Transverse colon (tissue), 4 donors: ENCODE measurements at regions of chr22 and their contacts with region 1.

Region 1: DNA sequence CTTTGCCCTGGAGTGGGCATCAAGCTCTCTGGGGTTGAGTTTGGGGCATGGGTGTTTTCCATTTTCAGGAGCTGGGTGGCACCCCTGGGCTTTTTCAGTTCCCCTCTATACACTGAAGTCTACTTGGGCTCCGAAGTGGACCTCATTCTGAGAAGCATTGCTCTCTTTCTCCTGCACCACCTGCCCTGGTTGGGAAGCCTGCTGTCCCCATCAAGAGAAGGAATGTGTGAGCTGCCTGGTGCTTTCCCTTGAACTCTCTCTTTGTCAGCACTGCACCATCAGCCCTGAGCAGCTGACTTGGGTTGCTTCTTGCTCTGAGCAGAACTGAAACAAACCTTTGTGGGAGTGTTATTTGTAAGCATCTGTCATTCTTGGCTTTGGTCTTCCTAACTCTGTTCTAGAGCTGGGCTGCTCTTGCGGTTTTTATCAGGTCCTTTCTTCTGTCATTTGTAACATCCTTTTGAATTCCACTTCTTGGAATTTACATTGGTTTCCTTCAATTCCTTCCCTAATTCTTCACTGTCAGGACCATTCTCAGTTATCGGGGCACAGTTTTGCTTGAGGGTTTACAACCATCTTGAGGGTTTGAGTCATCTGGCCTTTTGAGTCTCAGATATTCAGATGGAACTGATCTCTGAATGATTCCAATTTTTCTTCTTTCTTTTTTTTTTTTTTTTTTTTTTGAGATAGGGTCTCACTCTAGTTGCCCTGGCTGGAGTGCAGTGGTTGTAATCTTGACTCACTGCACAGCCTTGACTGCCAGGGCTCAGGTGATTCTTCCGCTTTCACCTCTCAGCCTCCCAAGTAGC is 20.5 kb downstream of the UBE2L3 start:
- DNase-seq: peak; percentile 22
- H3K4me3 ChIP-seq: no peak overlapping the region
- H3K27ac ChIP-seq: no peak overlapping the region
- H3K4me1 ChIP-seq: peaks cover 7 to 57% (median 20%) of the 10 kb centered on the region in 4 donors
- H3K27me3 ChIP-seq: no peaks in the 10 kb centered on the region
- CTCF ChIP-seq: no peak
- EP300 ChIP-seq: no peak
- POLR2A ChIP-seq: no peak

Region 2: GRCh38 chr22:21098099-21098671 is 489.8 kb before region 1 on chr22:
- in situ Hi-C with region 1: loop called in 1 of 4 experiments (anchors 25 kb)
- intact Hi-C with region 1: no loop called
- DNase-seq: no peak
- H3K4me3 ChIP-seq: no peak overlapping the region
- H3K27ac ChIP-seq: no peak overlapping the region
- H3K4me1 ChIP-seq: no peaks in the 10 kb centered on the region
- H3K27me3 ChIP-seq: peaks cover 7% of the 10 kb centered on the region
- CTCF ChIP-seq: no peak
- EP300 ChIP-seq: no peak
- POLR2A ChIP-seq: no peak